ENCODE measurements at regions of chr3 and their contacts with region 1.

Region 1: DNA sequence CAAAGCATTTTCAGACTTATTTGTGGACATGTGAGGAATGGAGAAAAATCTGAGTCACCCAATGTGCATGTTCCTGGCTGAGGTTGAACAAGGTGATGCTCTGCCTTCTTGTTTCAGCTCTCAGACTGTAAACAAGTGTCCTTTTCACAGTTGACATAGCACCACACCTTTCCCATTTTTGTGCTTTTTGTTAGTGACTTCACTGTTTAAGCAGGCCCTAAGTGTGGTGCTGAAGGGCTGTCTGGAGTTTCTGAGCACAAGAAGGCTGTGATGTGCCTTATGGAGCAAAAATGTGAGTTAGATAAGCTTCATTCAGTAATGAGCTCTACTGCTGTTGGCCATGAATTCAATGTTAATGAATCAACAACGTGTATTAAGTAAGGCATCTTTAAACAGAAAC is 20.4 kb downstream of the ABI3BP start:
- DNase-seq: no peak
- ATAC-seq: peak in 1 of 2 donors; percentile 32

Region 2: GRCh38 chr3:100875239-100875638 is 97.6 kb before region 1 on chr3:
- intact Hi-C with region 1: loop called in 1 of 2 experiments (anchors 10 kb)
- DNase-seq: peak; percentile 50
- ATAC-seq: peak; percentile 40 to 74